Dorsolateral prefrontal cortex (tissue), 120 donors: ENCODE measurements at regions of chr7 and their contacts with region 1.

Region 1: GRCh38 chr7:37198906-37199485 is 249.7 kb downstream of the ELMO1 start:
- DNase-seq: peak; percentile 83 to 95 (median 86)
- H3K4me3 ChIP-seq: peak overlapping the region in 2 of 59 donors; percentile 14 to 25
- H3K27ac ChIP-seq: peak overlapping the region in 26 of 59 donors; percentile 4 to 93 (median 48)
- H3K27me3 ChIP-seq: no peaks in the 10 kb centered on the region
- CTCF ChIP-seq: peak; percentile 81 to 96 (median 92)

Region 2: GRCh38 chr7:36473454-36474282 is 725.3 kb before region 1 on chr7:
- intact Hi-C with region 1: loop called in 1 of 2 experiments (anchors 5 kb)
- DNase-seq: peak; percentile 25 to 79 (median 65)
- H3K4me3 ChIP-seq: no peak overlapping the region
- H3K27ac ChIP-seq: no peak overlapping the region
- H3K27me3 ChIP-seq: no peaks in the 10 kb centered on the region
- CTCF ChIP-seq: peak in 54 of 56 donors; percentile 23 to 74 (median 59)

Region 3: DNA sequence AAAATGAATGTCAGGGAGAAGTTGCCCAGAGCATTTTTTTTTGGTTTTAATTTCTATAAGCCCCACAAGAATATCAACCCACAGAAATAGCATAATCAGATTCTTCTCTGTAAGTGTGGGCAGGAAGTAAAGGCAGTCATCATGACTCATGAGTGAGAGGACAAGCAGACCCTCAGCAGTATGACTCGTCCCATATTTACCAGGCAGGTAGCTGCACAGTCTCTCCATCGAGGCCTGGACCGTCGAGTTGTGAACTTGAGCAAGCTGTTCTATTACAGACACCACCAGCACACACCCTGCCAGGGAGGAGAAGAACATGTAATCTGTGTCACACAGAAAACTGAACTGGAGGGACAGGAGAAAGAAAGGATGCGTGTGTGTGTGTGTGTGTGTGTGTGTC is 512.5 kb before region 1 on chr7:
- intact Hi-C with region 1: loop called in 1 of 2 experiments (anchors 5 kb)
- DNase-seq: peak in 4 of 10 donors; percentile 8 to 70 (median 38)
- H3K4me3 ChIP-seq: no peak overlapping the region
- H3K27ac ChIP-seq: no peak overlapping the region
- H3K27me3 ChIP-seq: no peaks in the 10 kb centered on the region
- CTCF ChIP-seq: no peak

Region 4: DNA sequence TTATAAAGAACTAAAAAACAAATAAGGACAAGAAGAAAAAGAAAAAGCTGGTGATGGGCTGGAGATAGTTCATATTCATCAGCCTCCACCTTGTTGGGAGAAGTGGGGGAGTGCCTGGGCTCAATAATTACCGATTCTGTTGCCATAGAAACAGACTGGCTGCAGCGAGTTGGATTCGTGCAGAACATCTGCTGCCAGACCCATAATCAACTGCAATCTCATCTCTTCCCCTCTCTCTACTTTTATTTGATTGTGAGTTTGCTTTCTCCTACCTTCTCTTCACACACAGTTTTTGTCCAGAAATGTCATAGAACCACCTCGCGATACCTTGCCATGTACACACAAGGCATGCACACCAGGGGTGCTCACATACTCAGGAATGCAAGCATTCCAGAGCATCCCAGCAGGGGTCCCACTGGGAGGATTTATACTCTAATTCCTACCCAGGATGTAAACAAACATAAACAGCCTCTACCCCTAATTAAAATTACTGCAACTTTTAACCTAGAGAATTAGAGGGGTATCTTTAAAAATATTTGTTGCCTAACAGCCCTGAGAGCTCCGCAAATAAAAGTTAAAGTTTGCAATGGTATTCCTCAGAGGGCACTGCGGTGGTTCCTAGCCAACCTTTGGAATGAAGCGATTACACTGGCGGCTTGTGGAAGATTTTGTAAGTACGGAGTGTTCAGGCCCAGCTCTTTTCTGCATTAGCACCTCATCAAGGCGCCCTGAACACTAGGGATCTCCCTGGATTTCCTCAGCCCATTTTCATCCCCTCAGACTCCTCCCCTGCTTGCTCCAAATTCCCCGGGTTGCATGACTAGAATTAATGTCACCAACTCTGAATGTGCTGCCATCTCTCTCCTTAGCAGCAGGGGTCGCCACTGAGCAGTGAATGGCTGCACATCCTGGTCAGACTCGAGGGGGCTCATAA is 212.3 kb before region 1 on chr7:
- intact Hi-C with region 1: loop called in 1 of 2 experiments (anchors 5 kb)
- DNase-seq: peak; percentile 59 to 89 (median 76)
- H3K4me3 ChIP-seq: peak overlapping the region in 58 of 59 donors; percentile 3 to 70 (median 55)
- H3K27ac ChIP-seq: peak overlapping the region in 51 of 59 donors; percentile 5 to 85 (median 62)
- H3K27me3 ChIP-seq: no peaks in the 10 kb centered on the region
- CTCF ChIP-seq: peak; percentile 44 to 97 (median 86)

Region 5: DNA sequence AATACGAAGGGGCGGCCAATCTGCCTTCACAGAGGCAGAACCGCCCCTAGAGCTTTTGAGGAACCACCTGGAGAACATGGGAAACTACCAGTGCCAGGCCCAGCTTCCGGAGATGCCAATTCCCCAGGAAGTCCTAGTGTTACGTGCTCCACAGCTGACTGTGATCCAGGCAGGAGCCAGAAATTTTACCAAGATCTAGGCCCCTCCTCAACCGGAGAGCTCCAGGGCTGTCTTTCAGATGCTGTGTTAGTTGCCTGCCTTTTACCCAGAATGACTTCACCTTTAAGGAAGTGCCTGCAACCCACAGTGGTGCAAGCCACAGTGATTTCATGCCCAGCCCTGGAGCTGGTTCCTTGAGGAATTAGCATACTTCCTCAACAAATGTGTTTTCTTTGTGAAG is 186.8 kb after region 1 on chr7:
- intact Hi-C with region 1: no loop called
- DNase-seq: no peak
- H3K4me3 ChIP-seq: no peak overlapping the region
- H3K27ac ChIP-seq: peak overlapping the region in 19 of 59 donors; percentile 7 to 56 (median 24)
- H3K27me3 ChIP-seq: no peaks in the 10 kb centered on the region
- CTCF ChIP-seq: no peak